Ascending aorta (tissue), 2 donors: ENCODE measurements at regions of chr9 and their contacts with region 1.

Region 1: DNA sequence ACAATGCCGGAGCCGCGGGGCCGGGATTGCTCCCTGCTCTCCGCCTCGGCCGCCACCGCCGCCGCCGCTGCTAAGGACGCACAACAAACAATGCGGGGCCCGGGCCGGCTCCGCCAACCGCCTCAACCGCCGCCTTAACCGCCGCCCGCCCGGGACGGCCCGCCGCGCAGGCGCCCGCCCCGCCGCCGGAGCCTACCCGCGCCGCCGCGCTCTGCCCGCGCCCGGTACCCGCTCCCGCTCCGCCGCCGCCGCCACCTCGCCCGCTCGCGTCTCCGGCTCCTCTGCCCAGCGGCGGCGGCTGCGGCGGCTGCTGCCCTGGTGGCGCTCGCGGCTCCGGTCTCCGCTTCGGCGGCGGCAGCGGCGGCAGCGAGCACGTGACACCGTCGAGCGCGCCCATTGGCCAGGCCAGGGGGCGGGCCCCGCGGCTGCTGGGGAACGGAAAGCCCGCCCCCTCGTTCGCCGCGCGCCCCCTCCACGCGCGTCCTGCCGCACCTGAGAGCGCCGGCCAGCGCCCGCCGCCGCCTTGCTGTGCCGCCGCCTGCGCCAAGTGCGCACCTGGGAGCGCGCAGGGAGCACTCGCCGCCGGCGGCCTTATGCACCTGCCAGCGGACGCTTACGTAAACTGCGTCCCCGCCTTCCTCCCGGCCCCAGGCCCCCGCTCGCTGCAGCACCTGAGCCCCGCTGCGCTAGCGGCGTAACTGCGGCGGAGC is at the start of gene STRBP:
- DNase-seq: peak; percentile 59 to 93
- H3K4me3 ChIP-seq: peak within 1 kb of the TSS; percentile 79 to 87
- H3K27ac ChIP-seq: no peak within 1 kb of the TSS
- H3K4me1 ChIP-seq: peaks cover 0 to 5% of the 10 kb centered on the region in 2 donors
- H3K27me3 ChIP-seq: no peaks in the 10 kb centered on the region
- CTCF ChIP-seq: no peak
- total RNA-seq, gene STRBP: 0.43 TPM

Region 2: DNA sequence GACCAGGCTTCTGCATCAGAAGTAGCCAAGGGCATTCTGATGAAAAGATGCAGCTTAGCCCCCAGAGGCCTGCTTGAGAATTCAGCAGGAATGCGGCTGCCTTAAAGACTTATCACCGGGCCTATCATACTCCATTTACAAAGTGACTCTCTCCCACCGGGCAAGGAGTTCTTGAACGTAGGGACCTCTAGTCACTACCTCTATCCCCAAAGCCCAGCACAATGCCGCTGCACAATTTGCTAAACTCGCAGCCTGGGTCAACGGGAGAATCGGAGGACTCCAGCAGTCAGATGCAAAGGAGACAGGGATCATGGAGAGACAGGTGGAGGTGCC is 440.7 kb before region 1 on chr9:
- intact Hi-C with region 1: loop called (anchors 5 kb)
- DNase-seq: no peak
- H3K4me3 ChIP-seq: peak overlapping the region; percentile 64 to 92
- H3K27ac ChIP-seq: peak overlapping the region; percentile 93 to 98
- H3K4me1 ChIP-seq: peaks cover 3 to 15% of the 10 kb centered on the region in 2 donors
- H3K27me3 ChIP-seq: no peaks in the 10 kb centered on the region
- CTCF ChIP-seq: no peak